Adrenal gland (tissue), 19 donors: ENCODE measurements at regions of chr9 and their contacts with region 1.

Region 1: DNA sequence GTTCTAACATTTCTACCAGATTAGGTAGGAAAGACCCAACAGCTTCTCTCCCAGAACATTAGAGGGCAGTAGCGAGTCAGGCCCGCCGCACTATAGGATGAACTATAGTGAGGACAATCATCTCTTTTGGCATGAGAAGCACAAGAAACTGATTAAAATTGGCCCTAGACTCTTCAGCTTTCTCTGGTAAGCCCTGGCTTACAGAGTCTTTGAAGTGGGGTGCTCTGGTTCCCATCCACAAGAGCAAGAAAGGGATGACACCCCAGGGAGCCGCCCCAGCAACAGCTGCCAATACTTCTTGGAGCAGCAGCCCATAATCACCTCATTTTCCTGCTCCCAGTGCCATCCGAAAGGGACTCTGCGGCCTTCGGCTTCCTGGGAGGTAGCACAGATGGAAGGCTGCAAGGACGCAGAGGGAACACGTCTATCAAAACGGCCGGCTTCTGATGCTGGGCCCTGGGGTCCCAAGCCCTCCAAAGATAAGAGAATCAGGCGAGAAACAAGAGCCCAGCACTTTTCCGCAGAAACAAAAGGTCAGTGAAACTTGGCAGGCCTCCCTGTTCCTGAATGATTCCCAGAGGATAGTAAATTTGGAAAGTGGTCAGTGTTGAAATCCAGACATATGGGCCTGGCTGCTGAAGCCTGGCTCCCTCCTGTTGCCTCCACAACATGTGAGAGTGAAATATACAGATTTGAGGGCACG is 69.3 kb downstream of the HSD17B3 start:
- DNase-seq: peak; percentile 47 to 80 (median 55)
- H3K4me3 ChIP-seq: no peak overlapping the region
- H3K27ac ChIP-seq: peak overlapping the region in 2 of 5 donors; percentile 34 to 75
- H3K4me1 ChIP-seq: peaks cover 0 to 11% of the 10 kb centered on the region in 2 donors
- H3K27me3 ChIP-seq: no peaks in the 10 kb centered on the region
- CTCF ChIP-seq: peak; percentile 64 to 87 (median 70)
- POLR2A ChIP-seq: no peak

Region 2: GRCh38 chr9:96256800-96257199 is 24.1 kb after region 1 on chr9:
- intact Hi-C with region 1: no loop called
- DNase-seq: no peak
- H3K4me3 ChIP-seq: no peak overlapping the region
- H3K27ac ChIP-seq: no peak overlapping the region
- H3K4me1 ChIP-seq: no peaks in the 10 kb centered on the region
- H3K27me3 ChIP-seq: no peaks in the 10 kb centered on the region
- CTCF ChIP-seq: no peak
- POLR2A ChIP-seq: no peak

Region 3: DNA sequence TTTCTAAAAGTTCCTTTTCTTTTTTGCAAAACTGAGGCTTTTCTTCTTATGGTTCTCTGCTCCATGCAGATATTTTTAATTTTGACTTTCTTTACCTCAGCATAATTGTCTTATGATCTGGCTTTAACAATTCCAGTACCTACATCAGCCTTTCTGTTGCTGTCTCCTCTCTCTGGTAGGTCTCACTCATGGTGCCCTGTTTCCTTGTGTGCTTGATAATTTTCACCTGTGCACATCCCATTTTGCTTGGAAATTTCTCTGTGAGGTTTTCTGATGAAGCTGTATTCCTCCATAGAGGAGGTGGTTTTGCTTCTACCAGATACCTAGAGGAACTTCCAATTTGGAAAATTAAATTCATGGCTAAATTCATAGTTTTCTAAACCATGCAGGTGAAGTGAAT is 71.5 kb after region 1 on chr9:
- intact Hi-C with region 1: no loop called
- DNase-seq: no peak
- H3K4me3 ChIP-seq: no peak overlapping the region
- H3K27ac ChIP-seq: no peak overlapping the region
- H3K4me1 ChIP-seq: no peaks in the 10 kb centered on the region
- H3K27me3 ChIP-seq: no peaks in the 10 kb centered on the region
- CTCF ChIP-seq: no peak
- POLR2A ChIP-seq: no peak

Region 4: DNA sequence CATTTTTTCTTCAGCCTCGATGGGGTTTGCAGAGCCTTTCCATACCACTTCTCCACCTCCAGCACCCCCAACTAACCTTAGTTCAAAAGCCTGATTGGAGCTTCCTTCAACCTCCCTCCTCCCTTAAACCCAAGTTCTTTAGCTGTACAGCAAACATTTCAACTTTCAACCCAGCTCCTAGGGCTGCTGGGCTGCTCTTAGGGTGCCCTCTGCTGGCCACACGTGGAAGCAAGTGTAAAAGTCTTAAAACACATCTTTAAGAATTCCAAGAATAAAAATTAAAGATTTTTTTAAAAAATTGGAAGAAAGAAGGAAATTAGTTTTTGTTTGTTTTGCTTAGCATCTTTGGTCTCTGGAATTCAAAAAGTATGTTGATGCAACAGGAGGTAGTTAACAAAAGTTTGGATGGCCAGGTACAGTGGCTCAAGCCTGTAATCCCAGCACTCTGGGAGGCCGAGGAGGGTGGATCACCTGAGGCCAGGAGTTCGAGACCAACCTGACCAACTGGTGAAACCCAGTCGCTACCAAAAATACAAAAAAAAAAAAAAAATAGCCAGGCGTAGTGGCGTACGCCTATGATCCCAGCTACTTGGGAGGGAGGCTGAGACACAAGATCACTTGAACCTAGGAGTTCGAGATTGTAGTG is 84.8 kb after region 1 on chr9:
- intact Hi-C with region 1: loop called (anchors 5 to 10 kb)
- DNase-seq: peak; percentile 17 to 80 (median 44)
- H3K4me3 ChIP-seq: no peak overlapping the region
- H3K27ac ChIP-seq: no peak overlapping the region
- H3K4me1 ChIP-seq: no peaks in the 10 kb centered on the region
- H3K27me3 ChIP-seq: no peaks in the 10 kb centered on the region
- CTCF ChIP-seq: peak; percentile 68 to 74 (median 73)
- POLR2A ChIP-seq: no peak

Region 5: GRCh38 chr9:96661711-96662110 is 429.0 kb after region 1 on chr9:
- intact Hi-C with region 1: loop called (anchors 10 kb)
- DNase-seq: no peak
- H3K4me3 ChIP-seq: no peak overlapping the region
- H3K27ac ChIP-seq: no peak overlapping the region
- H3K4me1 ChIP-seq: no peaks in the 10 kb centered on the region
- H3K27me3 ChIP-seq: no peaks in the 10 kb centered on the region
- CTCF ChIP-seq: no peak
- POLR2A ChIP-seq: no peak